ENCODE measurements at regions of chr11 and their contacts with region 1.

Region 1: GRCh38 chr11:61129639-61130523 is 27.6 kb downstream of the CD5 start:
- DNase-seq: peak; percentile 84
- H3K4me3 Mint-ChIP-seq: peak overlapping the region; percentile 5
- H3K27ac Mint-ChIP-seq: peak overlapping the region; percentile 34
- H3K4me1 Mint-ChIP-seq: peaks cover 23% of the 10 kb centered on the region
- H3K27me3 Mint-ChIP-seq: no peaks in the 10 kb centered on the region

Region 2: DNA sequence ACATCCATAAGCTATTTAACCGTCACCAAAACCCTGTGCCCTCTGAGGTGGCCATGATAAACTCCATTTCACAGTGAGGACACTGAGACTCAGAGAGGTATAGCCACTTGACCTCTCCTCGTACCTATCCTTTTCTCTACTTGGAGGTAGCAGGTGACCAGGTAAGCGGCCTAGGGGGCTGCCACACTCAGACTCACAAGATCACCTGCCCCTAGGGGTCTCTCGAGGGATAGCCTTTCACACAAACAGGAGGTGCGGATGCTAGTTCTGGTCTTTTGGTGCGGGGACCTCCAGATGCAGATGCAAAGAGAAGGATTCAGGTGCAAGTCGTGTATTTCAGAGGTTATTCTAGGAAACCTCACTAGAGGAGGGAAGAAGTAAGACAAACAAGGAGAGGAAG is 390.8 kb before region 1 on chr11:
- intact Hi-C with region 1: no loop called
- DNase-seq: no peak
- H3K4me3 Mint-ChIP-seq: no peak overlapping the region
- H3K27ac Mint-ChIP-seq: no peak overlapping the region
- H3K4me1 Mint-ChIP-seq: no peaks in the 10 kb centered on the region
- H3K27me3 Mint-ChIP-seq: peaks cover 6% of the 10 kb centered on the region

Region 3: GRCh38 chr11:61083601-61084147 is 46.2 kb before region 1 on chr11:
- intact Hi-C with region 1: loop called (anchors 2 kb)
- DNase-seq: peak; percentile 75
- H3K4me3 Mint-ChIP-seq: peak overlapping the region; percentile 83
- H3K27ac Mint-ChIP-seq: peak overlapping the region; percentile 96
- H3K4me1 Mint-ChIP-seq: peaks cover 61% of the 10 kb centered on the region
- H3K27me3 Mint-ChIP-seq: no peaks in the 10 kb centered on the region

Region 4: DNA sequence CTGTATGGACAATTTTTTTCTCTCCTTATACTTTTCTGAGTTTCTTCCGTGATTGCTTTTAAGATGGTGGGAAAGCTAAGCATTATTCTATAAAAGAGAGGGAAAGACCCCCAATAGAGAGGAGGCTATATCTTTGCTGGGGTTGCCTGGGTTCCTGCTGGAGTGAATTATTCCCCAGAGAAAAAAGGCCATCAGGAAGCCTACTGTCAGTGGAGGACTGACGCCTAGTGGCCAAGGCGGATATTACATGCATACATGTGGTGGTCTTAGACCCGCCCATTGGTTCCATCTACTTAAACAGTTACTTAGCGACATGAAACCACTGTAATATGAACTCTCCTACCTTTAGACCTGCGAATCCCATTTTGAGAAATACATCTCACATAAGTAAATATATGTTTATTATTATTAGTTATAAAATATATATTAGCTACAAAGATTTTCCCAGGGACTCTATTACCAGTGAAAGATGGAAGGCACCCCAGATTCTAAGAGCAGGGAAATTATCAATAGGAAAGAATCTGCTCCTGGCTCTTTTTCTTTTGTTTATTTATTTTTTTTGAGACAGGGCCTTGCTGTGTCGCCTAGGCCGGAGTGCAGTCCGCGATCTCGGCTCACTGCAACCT is 57.7 kb after region 1 on chr11:
- intact Hi-C with region 1: loop called (anchors 2 kb)
- DNase-seq: peak; percentile 62
- H3K4me3 Mint-ChIP-seq: no peak overlapping the region
- H3K27ac Mint-ChIP-seq: no peak overlapping the region
- H3K4me1 Mint-ChIP-seq: peaks cover 5% of the 10 kb centered on the region
- H3K27me3 Mint-ChIP-seq: peaks cover 16% of the 10 kb centered on the region

Measured in activated T-helper 2 cell treated with anti-CD3 and anti-CD28 coated beads, Interferon-gamma antibody, Interleukin-2, Interleukin-4, amounts not matched to agents 10 μg/mL and 5 μg/mL and 100 μg/mL, durations not matched to agents 14 hours and 24 hours and 36 hours (primary cell).